Panc1 (cell line): ENCODE measurements at regions of chr4 and their contacts with region 1.

Region 1: DNA sequence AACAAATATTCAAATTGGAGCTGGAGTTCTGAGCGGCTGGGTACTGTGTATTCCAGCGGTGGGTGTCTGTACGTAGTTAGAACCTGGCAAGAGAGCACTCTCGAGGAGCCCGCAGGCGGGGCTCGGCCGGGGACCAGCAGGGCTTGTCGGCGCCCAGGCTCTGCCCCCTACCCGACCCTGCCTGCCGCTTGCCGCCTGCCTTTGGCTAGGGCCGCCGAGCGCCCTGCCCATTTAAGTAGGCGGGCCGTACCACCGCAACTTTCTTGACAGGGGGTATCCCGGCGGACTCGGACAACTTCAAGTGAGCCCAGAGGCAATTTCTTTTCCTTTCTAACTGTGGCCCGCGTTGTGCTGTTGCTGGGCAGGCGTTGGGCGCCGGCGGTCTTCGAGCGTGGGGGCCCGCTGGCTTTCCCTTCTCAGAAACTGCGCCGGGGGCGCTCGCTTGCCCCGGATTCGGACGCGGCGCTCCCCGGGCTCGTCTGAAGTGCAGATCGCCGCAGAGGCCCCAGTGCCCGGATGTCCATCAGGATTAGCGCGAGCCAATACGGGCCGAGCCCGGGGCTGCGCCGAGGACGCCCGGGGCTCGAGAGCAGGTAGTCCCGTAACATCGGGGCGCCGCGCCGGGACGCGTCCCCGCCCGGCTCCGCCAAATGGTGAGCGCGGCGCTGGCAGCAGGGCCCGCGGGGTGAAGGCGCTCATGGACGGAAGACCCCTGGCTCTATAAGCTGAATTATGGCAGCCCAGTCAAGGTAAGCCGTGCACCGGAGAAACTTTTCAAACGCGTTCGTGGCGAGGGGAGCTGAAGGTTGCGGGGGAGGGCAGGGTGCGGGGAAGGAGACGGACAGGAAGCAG is 72.1 kb downstream of the AFF1 start:
- DNase-seq: peak; percentile 59
- ATAC-seq: peak; percentile 96
- H3K4me3 ChIP-seq: peak overlapping the region; percentile 69 to 84
- H3K27ac ChIP-seq: peak overlapping the region; percentile 85
- H3K4me1 ChIP-seq: peaks cover 22% of the 10 kb centered on the region
- H3K27me3 ChIP-seq: no peaks in the 10 kb centered on the region
- CTCF ChIP-seq: peak; percentile 32; the same call in 1 of the 2 replicates

Region 2: GRCh38 chr4:86398187-86398586 is 608.7 kb before region 1 on chr4:
- CTCF ChIA-PET with region 1: no interaction called
- POLR2A ChIA-PET with region 1: no interaction called
- in situ Hi-C with region 1: no loop called
- intact Hi-C with region 1: no loop called
- DNase-seq: no peak
- ATAC-seq: no peak
- H3K4me3 ChIP-seq: no peak overlapping the region
- H3K27ac ChIP-seq: no peak overlapping the region
- H3K4me1 ChIP-seq: no peaks in the 10 kb centered on the region
- H3K27me3 ChIP-seq: no peaks in the 10 kb centered on the region
- CTCF ChIP-seq: no peak

Region 3: DNA sequence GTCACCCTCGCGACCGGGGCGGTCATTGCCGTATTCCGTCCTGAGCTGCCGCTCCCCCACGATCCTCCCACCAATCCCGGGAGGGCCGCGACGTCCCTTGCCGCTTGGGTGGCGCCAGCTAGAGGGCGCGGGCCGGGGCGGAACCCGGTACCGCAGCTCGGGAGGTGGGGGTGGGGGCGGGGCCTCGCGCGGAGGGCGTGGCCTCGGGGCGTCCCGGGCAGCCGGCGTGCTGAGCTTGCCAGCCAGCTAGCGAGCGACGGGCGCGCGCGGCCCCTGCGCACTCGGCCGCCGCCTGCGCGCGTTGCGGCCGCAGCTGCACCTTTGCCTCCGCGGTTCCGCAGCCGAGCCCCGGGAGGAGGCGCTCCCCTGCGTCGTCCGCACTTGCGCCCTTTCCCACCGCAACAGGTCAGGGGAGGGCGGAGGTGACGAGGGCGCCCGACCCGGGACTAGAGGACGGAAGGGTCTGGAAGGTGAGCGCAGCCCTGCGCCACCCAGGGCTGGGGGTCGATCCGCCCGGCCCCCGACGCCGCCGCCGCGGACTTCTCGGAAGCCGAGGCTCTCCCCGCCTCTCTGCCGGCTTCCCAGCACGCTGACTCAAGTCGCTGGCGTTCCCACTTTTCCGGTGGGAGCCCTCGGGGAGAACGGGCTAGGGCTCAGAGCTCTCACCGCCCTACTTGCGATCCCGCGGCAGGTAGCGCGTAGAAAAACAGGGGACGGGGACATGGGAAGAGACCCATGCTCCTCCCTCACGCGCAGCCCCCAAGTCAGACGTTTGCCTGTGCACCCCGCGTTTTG is 71.9 kb before region 1 on chr4 and contains the start of gene AFF1:
- CTCF ChIA-PET with region 1: no interaction called
- POLR2A ChIA-PET with region 1: interaction called, 4 read pairs
- in situ Hi-C with region 1: no loop called
- intact Hi-C with region 1: loop called (anchors 2 kb)
- DNase-seq: peak; percentile 57
- ATAC-seq: peak; percentile 91
- H3K4me3 ChIP-seq: peak within 1 kb of the TSS; percentile 73 to 90
- H3K27ac ChIP-seq: peak within 1 kb of the TSS; percentile 94
- H3K4me1 ChIP-seq: peaks cover 8% of the 10 kb centered on the region; the same call in 1 of the 2 replicates
- H3K27me3 ChIP-seq: no peaks in the 10 kb centered on the region
- CTCF ChIP-seq: peak; percentile 61
- total RNA-seq, gene AFF1: 23.9 TPM

Region 4: DNA sequence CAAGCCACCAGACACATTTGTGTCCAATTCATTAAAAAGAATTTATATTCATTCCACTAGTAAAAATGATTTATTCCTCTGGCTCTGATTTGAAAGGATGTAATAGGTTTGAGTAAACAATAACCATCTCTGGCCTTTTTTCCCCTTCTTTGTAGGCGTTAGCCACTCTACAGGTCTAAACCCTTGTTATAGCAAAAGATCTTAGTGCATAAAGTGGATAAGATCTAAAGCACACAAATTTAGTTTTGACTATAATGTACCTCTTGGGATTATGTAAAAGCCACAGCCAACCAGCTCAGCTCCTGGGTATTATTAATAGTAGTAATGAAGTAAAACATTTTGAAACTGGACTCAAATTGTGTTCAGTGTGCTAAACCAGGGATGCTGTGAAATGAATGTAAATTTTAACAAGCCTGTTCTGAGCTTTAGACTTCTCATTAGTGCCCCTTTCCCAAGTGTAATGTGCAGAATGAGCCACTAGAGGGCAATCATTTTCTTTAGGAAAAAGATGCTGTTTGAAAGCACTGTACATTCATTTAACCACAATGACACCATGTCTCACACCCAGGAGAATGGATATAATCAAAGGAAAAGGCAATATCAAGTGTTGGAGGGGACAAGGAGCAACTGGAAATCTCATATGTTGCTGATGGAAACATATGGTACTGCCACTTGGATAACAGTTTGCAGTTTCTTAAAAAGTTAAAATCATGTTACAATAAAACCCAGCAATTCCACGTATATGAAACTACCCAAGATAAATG is 143.8 kb after region 1 on chr4:
- CTCF ChIA-PET with region 1: no interaction called
- POLR2A ChIA-PET with region 1: no interaction called
- in situ Hi-C with region 1: no loop called
- intact Hi-C with region 1: no loop called
- DNase-seq: peak; percentile 57
- ATAC-seq: peak; percentile 86
- H3K4me3 ChIP-seq: no peak overlapping the region
- H3K27ac ChIP-seq: no peak overlapping the region
- H3K4me1 ChIP-seq: no peaks in the 10 kb centered on the region
- H3K27me3 ChIP-seq: no peaks in the 10 kb centered on the region
- CTCF ChIP-seq: peak; percentile 71; the same call in 1 of the 2 replicates